CD4-positive, alpha-beta T cell (primary cell): ENCODE measurements at regions of chr22 and their contacts with region 1.

Region 1: DNA sequence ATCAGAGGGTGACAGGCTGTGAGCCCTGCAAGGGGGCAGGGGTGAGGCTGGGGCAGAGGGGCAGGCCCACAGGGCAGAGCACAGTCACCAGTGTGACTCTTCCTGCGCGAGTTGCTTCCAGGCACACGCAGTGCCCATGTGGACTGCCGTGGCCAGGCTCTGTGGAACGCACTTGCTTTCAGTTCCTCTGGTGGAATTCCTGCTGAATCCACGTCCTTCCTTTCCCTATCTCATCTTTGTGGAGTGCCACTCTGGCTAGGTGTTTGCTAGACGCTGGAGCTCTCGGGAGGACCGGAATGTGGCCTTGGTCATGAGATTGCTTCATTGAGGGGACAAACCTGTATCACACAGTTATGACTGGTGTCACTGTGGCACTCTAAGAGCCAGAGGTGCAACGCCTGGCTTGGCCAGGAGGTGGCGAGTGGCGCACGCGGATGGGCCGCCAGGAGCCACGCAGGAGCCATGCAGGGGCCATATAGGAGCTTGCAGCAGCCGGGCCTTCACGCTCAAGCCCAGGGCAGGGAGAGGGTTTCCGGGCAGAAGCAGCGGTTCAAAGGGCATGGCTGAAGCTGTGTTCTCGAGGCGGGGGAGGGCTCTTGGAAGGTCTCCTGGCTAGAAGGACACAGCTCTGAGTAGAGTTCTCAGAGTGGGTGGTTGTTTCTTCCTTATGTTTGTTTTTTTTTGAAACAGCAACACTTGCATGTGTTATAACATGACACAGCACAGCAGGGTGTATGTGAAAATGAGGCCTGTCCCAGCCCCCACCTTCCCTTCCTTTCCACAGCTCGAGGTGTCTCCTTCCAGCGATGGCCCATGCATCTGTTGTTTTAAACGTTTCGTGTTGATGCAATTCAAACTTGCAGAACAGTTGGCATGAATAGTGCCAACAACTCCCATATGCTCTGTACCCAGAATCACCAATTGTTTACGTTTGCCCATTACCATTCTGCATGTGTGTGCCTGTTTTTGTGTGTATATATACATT is 36.2 kb downstream of the TBC1D22A start:
- DNase-seq: peak; percentile 54 to 85 (median 78)
- ATAC-seq: peak; percentile 85
- H3K4me3 ChIP-seq: no peak overlapping the region
- H3K4me3 Mint-ChIP-seq: peak overlapping the region; percentile 8
- H3K27ac ChIP-seq: no peak overlapping the region
- H3K27ac Mint-ChIP-seq: peak overlapping the region; percentile 84
- H3K4me1 ChIP-seq: peaks cover 14% of the 10 kb centered on the region
- H3K4me1 Mint-ChIP-seq: peaks cover 47% of the 10 kb centered on the region
- H3K27me3 ChIP-seq: no peaks in the 10 kb centered on the region
- H3K27me3 Mint-ChIP-seq: no peaks in the 10 kb centered on the region
- CTCF ChIP-seq: peak; percentile 79

Region 2: GRCh38 chr22:46108564-46109473 is 689.8 kb before region 1 on chr22:
- CTCF ChIA-PET with region 1: no interaction called
- POLR2A ChIA-PET with region 1: no interaction called
- intact Hi-C with region 1: no loop called
- DNase-seq: no peak
- ATAC-seq: no peak
- H3K4me3 ChIP-seq: no peak overlapping the region
- H3K4me3 Mint-ChIP-seq: no peak overlapping the region
- H3K27ac ChIP-seq: no peak overlapping the region
- H3K27ac Mint-ChIP-seq: no peak overlapping the region
- H3K4me1 ChIP-seq: no peaks in the 10 kb centered on the region
- H3K4me1 Mint-ChIP-seq: no peaks in the 10 kb centered on the region
- H3K27me3 ChIP-seq: no peaks in the 10 kb centered on the region
- H3K27me3 Mint-ChIP-seq: no peaks in the 10 kb centered on the region
- CTCF ChIP-seq: no peak

Region 3: GRCh38 chr22:46748908-46749675 is 49.6 kb before region 1 on chr22:
- CTCF ChIA-PET with region 1: interaction called, 130 read pairs
- POLR2A ChIA-PET with region 1: interaction called, 7 read pairs
- intact Hi-C with region 1: no loop called
- DNase-seq: peak; percentile 63 to 86 (median 80)
- ATAC-seq: peak; percentile 97
- H3K4me3 ChIP-seq: peak overlapping the region; percentile 51
- H3K4me3 Mint-ChIP-seq: peak overlapping the region; percentile 73
- H3K27ac ChIP-seq: peak overlapping the region; percentile 78 to 91
- H3K27ac Mint-ChIP-seq: peak overlapping the region; percentile 96
- H3K4me1 ChIP-seq: peaks cover 50% of the 10 kb centered on the region
- H3K4me1 Mint-ChIP-seq: peaks cover 34% of the 10 kb centered on the region
- H3K27me3 ChIP-seq: no peaks in the 10 kb centered on the region
- H3K27me3 Mint-ChIP-seq: no peaks in the 10 kb centered on the region
- CTCF ChIP-seq: no peak